ENCODE measurements at regions of chr11 and their contacts with region 1.

Region 1: DNA sequence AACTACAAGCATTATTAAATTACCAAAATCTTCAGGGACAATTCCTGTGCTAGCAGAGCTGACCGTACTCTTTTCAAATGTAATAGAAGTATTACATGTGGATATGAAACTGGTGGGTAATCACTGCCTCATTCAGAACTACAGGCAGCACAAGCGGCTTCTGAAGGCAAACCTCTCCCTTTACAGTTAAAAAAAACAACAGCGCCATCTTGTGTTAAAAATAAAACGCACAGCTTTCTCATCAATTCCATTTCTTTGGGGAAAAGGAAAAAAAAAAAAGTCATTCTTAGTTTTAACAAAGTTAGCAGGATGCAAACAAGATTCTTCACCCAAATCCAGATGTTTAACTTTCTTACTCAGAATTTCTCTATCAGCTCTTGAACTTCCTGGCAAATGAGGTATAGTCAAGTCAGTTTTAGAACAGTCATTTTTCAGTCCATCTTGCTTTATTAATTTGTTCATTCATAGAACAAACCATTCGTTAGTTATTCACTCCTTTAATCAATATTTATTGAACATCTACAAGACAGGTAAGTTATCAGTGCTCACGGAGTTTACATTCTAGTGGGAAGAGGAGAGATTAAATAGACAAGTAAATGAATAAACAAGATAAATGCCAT is 331.8 kb upstream of the MPPED2 start:
- DNase-seq: no peak
- ATAC-seq: peak; percentile 63
- H3K4me3 ChIP-seq: no peak overlapping the region
- H3K27ac ChIP-seq: no peak overlapping the region
- H3K4me1 ChIP-seq: no peaks in the 10 kb centered on the region
- H3K27me3 ChIP-seq: peaks cover 14% of the 10 kb centered on the region
- CTCF ChIP-seq: peak; percentile 66

Region 2: DNA sequence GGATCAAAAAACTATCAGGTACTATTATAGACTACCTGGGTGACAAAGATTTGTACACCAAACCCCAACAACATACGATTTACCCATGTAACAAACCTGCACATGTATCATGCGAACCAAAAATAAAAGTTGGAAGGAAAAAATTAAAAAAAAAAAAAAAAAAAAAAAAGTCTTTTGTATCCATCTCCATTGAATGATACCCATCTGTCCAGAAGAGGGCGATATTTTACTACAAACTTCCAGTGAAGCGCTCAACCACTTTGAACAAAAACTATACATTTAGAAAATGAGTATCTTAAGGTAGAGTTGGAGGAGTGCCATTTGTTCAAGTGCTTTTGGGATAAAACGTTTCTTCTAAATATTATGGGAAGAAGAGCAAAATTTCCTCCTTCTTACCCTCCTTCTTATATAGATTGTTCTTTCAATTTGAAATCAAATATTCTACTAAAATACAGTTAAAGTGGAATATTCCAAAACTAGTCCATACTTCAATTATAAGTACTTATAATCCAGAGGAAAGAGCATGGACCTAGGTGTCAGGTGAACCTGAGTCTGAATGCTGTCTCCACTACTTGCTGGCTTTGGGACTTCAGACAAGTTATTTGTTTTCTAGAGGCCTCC is 571.8 kb before region 1 on chr11:
- intact Hi-C with region 1: loop called (anchors 5 kb)
- DNase-seq: no peak
- ATAC-seq: peak; percentile 53
- H3K4me3 ChIP-seq: no peak overlapping the region
- H3K27ac ChIP-seq: no peak overlapping the region
- H3K4me1 ChIP-seq: no peaks in the 10 kb centered on the region
- H3K27me3 ChIP-seq: no peaks in the 10 kb centered on the region
- CTCF ChIP-seq: peak; percentile 67

Region 3: GRCh38 chr11:30653606-30654005 is 264.4 kb before region 1 on chr11:
- intact Hi-C with region 1: no loop called
- DNase-seq: no peak
- ATAC-seq: no peak
- H3K4me3 ChIP-seq: no peak overlapping the region
- H3K27ac ChIP-seq: no peak overlapping the region
- H3K4me1 ChIP-seq: no peaks in the 10 kb centered on the region
- H3K27me3 ChIP-seq: no peaks in the 10 kb centered on the region
- CTCF ChIP-seq: no peak

Measured in upper lobe of right lung (tissue), 1 donor.